ENCODE measurements at regions of chr5 and their contacts with region 1.

Region 1: DNA sequence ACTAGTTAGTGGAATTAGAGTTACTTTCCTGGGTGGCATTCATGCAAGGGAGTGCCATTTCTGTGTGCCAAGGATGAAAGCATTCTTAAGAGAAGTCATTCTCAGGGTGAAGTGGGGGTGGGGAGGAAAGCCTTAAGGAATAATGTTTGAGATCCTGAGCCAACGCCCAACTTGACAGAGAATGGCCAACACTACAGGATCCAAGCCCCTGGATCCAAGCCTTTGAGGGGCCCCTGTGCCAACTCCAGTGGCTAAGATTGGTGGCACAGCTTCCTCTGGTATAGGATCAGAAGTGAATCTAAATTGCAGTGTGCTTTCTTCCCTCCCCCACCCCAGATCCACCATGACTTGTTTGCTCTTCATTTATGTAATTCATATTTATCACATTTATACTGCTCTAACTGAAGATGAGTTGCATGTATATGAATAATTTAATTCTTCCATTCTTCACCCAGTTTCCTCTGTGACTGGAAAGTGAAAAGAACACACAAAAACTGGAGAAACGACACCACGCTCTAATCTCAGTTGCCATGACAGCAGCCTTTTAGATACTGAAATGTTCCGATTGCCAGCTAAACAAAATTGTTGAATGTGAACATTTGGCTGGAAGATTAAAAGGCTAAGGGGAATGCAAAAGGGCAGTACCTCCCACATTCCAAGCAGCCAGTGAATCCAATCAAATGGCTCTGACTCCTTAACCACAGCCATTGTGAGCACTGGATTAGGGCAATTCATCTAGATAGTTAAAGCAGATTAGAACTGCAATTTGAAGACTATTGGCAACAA is 4.5 kb downstream of the ZNF608 start:
- DNase-seq: peak; percentile 93
- H3K4me3 ChIP-seq: peak overlapping the region; percentile 75 to 97 (median 75)
- H3K27ac ChIP-seq: peak overlapping the region; percentile 92
- H3K4me1 ChIP-seq: peaks cover 43% of the 10 kb centered on the region
- H3K27me3 ChIP-seq: no peaks in the 10 kb centered on the region
- CTCF ChIP-seq: no peak

Region 2: DNA sequence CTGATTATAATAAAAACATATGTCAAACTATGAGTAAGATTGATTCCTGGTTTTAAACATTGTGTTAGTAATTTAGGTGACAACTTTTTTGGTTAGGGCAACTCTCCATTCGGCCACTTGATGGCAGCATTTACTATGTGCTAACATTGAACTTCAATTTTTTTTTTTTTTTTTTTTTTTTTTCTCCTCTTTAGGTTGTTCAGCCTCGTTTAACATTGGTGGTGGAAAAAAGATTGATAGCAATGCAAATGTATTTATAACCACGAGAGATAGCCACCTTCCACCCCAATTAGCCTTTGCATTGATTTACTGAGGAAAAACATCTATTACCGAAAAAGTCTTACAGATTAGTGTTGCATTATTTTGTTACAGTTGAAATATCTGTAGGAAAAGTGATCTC is 1070.9 kb before region 1 on chr5:
- CTCF ChIA-PET with region 1: no interaction called
- dilution Hi-C with region 1: no loop called
- in situ Hi-C with region 1: no loop called
- intact Hi-C with region 1: loop called (anchors 5 kb)
- DNase-seq: peak; percentile 23
- H3K4me3 ChIP-seq: no peak overlapping the region
- H3K27ac ChIP-seq: no peak overlapping the region
- H3K4me1 ChIP-seq: no peaks in the 10 kb centered on the region
- H3K27me3 ChIP-seq: no peaks in the 10 kb centered on the region
- CTCF ChIP-seq: peak; percentile 67 to 80

Region 3: GRCh38 chr5:123937230-123937629 is 804.7 kb before region 1 on chr5:
- CTCF ChIA-PET with region 1: no interaction called
- dilution Hi-C with region 1: no loop called
- in situ Hi-C with region 1: no loop called
- intact Hi-C with region 1: loop called (anchors 2 kb)
- DNase-seq: peak; percentile 64
- H3K4me3 ChIP-seq: no peak overlapping the region
- H3K27ac ChIP-seq: no peak overlapping the region
- H3K4me1 ChIP-seq: no peaks in the 10 kb centered on the region
- H3K27me3 ChIP-seq: no peaks in the 10 kb centered on the region
- CTCF ChIP-seq: peak; percentile 54 to 73

Region 4: GRCh38 chr5:124649491-124650146 is 92.3 kb before region 1 on chr5:
- CTCF ChIA-PET with region 1: no interaction called
- dilution Hi-C with region 1: loop called (anchors 5 kb)
- in situ Hi-C with region 1: loop called in 1 of 2 experiments (anchors 10 kb)
- intact Hi-C with region 1: no loop called
- DNase-seq: peak; percentile 90
- H3K4me3 ChIP-seq: no peak overlapping the region
- H3K27ac ChIP-seq: peak overlapping the region; percentile 56
- H3K4me1 ChIP-seq: peaks cover 55% of the 10 kb centered on the region
- H3K27me3 ChIP-seq: no peaks in the 10 kb centered on the region
- CTCF ChIP-seq: no peak

Region 5: GRCh38 chr5:124661317-124662141 is 80.4 kb before region 1 on chr5:
- CTCF ChIA-PET with region 1: no interaction called
- dilution Hi-C with region 1: no loop called
- in situ Hi-C with region 1: no loop called
- intact Hi-C with region 1: loop called (anchors 1 kb)
- DNase-seq: peak; percentile 82
- H3K4me3 ChIP-seq: peak overlapping the region in 1 of 3 experiments; percentile 2
- H3K27ac ChIP-seq: peak overlapping the region; percentile 95
- H3K4me1 ChIP-seq: peaks cover 49% of the 10 kb centered on the region
- H3K27me3 ChIP-seq: no peaks in the 10 kb centered on the region
- CTCF ChIP-seq: no peak

Region 6: DNA sequence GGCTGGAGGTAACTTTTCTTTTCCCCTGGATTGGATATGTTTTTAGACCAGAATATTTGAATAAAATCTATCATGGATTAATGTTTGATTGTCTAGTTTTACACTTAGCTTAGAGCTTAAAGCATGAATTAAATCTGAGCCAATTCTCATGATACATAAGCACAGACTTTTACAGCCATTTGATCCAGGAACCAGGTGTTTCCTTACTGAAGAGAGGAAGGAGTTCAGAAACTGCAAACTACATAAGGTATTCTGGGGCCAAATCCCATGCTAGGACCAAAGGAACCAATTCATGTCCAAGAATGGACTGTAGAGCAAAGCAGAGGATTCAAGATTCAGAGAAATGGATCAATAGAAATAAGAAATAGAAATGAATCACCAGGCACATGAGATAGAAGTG is 365.0 kb after region 1 on chr5:
- CTCF ChIA-PET with region 1: no interaction called
- dilution Hi-C with region 1: no loop called
- in situ Hi-C with region 1: no loop called
- intact Hi-C with region 1: no loop called
- DNase-seq: no peak
- H3K4me3 ChIP-seq: no peak overlapping the region
- H3K27ac ChIP-seq: no peak overlapping the region
- H3K4me1 ChIP-seq: peaks cover 1% of the 10 kb centered on the region
- H3K27me3 ChIP-seq: no peaks in the 10 kb centered on the region
- CTCF ChIP-seq: no peak

Region 7: DNA sequence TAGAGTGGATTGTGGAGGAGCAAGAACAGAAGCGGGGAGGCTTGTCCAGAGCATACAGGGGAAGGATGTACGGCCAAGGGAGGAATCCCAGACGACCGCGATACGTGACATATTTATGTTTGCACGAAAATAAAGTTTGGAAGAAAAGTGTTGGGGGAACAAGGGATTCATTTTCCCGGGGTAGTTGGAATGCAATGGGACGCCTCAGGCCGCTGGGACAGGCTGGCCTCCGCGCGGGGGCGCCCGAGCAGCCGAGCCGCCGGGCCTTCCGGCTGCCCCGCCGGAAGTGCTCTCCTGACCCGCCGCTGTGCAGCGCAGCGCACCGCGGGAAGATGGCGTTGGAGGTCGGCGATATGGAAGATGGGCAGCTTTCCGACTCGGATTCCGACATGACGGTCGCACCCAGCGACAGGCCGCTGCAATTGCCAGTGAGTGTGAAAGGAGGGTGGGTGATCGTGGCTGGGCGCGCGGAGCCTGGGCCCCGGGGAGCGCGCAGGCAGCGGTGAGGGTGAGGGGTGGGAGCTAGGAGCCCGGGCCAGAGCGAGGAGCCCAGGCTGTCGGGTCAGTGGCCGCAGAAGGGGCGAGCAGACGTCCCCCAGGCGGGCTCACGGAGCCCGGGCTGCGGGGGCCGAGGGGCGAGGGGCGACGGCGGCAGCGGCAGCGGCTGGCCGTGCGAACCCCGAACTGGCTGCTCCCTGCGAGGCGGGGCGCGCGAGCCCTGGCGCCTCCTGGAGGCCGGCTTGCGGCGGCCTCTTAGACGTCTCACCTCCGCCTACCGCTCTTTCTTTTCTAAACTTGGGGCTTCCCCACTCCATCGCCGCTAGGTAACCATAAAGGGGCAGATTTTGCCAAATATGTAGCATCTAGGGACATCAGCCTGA is 1859.0 kb after region 1 on chr5 and contains the start of gene PHAX:
- CTCF ChIA-PET with region 1: no interaction called
- dilution Hi-C with region 1: no loop called
- in situ Hi-C with region 1: no loop called
- intact Hi-C with region 1: loop called (anchors 5 kb)
- DNase-seq: peak; percentile 79
- H3K4me3 ChIP-seq: peak within 1 kb of the TSS; percentile 96 to 98 (median 97)
- H3K27ac ChIP-seq: peak within 1 kb of the TSS; percentile 86
- H3K4me1 ChIP-seq: peaks cover 33% of the 10 kb centered on the region
- H3K27me3 ChIP-seq: no peaks in the 10 kb centered on the region
- CTCF ChIP-seq: peak; percentile 54 to 70
- total RNA-seq, gene PHAX: 49.0 to 52.4 TPM